ENCODE measurements at regions of chr15 and their contacts with region 1.

Region 1: DNA sequence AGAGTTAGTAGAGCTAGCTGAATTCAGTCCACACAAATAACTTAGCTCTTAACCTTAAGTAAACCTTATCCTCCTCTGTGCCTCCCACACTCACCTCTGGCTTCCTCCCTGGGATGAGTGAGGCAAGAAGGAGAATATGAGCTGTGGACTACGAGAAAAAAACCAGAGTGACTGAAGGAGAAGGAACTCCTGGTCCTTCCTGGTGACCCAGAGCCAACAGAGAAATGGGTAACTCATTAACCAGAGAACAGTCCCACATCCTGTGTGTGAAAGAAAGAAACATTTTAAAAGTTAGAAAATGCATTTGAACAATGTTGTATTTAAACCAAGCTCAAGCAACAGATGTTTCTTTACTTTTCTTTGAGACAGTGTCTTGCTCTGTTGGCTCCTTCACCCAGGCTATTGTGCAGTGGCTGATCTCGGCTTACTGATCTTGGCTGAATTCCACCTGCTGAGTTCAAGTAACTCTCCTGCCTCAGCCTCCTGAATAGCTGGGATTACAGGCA is 27.5 kb upstream of the FAM81A start:
- DNase-seq: peak; percentile 31
- ATAC-seq: peak; percentile 37
- H3K4me3 ChIP-seq: peak overlapping the region in 2 of 3 experiments; percentile 19 to 36; a peak in 1 of 6 replicates
- H3K27ac ChIP-seq: no peak overlapping the region
- H3K4me1 ChIP-seq: peaks cover 47% of the 10 kb centered on the region
- H3K27me3 ChIP-seq: no peaks in the 10 kb centered on the region
- CTCF ChIP-seq: no peak
- EP300 ChIP-seq: no peak
- POLR2A ChIP-seq: no peak
- RAD21 ChIP-seq: no peak

Region 2: DNA sequence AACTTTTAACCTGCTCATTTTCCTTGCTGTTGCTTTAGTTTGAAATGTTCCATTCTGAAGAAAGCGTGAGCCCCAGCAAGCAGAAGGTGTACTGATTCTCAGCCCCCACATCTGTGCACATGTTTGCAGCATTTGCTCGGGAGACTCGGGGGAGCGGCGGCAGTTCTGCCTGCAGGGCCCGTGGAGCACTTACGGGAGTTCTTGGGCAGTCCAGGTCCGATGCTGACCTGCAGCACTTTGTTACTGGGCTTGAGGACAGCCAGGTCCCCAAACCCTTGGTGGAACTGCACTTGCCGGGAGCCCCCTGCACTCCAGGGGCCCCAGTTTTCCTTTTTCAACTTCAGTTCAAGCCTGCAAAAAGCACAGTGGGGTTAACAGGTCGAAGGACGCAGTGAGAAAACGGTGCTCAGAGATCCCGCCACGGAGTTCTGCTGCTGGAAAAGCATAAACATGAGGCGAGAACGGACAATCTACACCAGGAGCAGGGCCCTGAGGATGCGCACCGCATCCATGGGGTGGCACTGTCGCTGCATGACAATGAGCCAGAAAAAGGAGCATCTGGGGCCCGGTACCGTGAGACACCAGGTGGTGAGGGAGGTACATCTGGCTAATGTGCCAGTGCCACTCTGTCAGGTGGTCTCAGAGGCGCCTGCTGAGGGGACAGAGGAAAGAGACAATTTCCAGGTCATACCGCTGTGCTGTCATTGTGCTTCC is 249.4 kb before region 1 on chr15:
- CTCF ChIA-PET with region 1: no interaction called
- POLR2A ChIA-PET with region 1: no interaction called
- in situ Hi-C with region 1: loop called (anchors 10 kb)
- intact Hi-C with region 1: no loop called
- DNase-seq: peak; percentile 25
- ATAC-seq: peak; percentile 87
- H3K4me3 ChIP-seq: no peak overlapping the region
- H3K27ac ChIP-seq: no peak overlapping the region
- H3K4me1 ChIP-seq: peaks cover 11% of the 10 kb centered on the region
- H3K27me3 ChIP-seq: no peaks in the 10 kb centered on the region
- CTCF ChIP-seq: peak; percentile 75
- EP300 ChIP-seq: no peak
- POLR2A ChIP-seq: no peak
- RAD21 ChIP-seq: peak; percentile 73

Region 3: DNA sequence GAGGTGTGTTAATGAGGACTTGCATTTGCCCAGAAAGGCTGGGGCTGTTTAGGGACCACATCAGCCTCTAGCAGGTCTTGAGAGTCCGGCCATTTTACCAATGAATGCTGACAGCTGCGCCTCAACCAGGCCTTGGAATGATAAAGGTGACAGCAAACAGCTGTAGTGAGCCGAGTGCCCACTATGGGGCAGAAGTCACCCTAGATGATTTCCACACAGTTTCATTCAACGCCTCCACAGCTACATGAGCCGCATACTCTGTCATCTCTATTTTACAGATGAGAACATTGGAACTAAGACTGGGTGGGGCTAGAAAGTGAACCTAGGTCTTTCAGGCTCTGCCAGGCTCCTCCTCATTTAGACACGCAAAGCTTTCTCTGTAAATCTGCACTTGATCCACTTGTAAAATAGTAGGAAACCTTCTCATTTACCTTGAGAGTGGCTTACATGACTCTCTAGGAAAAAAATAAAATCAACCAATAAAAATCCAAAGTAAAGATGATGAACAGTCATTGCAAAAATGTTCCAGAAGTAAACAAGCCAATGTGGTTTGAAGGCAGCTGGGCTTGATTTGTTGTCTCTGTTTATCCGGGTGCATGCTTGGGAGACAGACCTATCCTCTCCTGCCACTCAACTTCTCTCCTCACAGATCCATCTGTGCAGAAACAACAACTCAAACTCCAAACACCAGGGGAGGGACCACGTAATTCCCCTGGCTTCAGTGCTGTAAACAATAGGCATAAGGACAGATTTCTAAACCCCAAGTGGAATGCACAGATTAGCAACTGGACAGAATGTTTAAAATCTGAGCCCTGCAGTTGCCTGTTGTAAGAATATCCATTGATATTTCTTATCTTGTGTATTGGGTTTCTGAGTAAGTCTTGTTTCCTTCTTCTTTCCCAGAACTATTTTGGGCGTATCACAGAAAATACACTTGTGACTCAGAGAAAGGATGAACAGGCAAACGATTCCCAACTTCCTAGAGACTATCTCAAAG is 235.3 kb before region 1 on chr15:
- CTCF ChIA-PET with region 1: interaction called, 8 read pairs
- POLR2A ChIA-PET with region 1: no interaction called
- in situ Hi-C with region 1: no loop called
- intact Hi-C with region 1: loop called (anchors 2 kb)
- DNase-seq: peak; percentile 47
- ATAC-seq: peak; percentile 95
- H3K4me3 ChIP-seq: no peak overlapping the region
- H3K27ac ChIP-seq: no peak overlapping the region
- H3K4me1 ChIP-seq: peaks cover 6% of the 10 kb centered on the region
- H3K27me3 ChIP-seq: no peaks in the 10 kb centered on the region
- CTCF ChIP-seq: peak; percentile 70
- EP300 ChIP-seq: no peak
- POLR2A ChIP-seq: no peak
- RAD21 ChIP-seq: peak; percentile 64

Region 4: GRCh38 chr15:59199626-59200465 is 210.6 kb before region 1 on chr15:
- CTCF ChIA-PET with region 1: no interaction called
- POLR2A ChIA-PET with region 1: no interaction called
- in situ Hi-C with region 1: no loop called
- intact Hi-C with region 1: no loop called
- DNase-seq: no peak
- ATAC-seq: no peak
- H3K4me3 ChIP-seq: no peak overlapping the region
- H3K27ac ChIP-seq: no peak overlapping the region
- H3K4me1 ChIP-seq: no peaks in the 10 kb centered on the region
- H3K27me3 ChIP-seq: no peaks in the 10 kb centered on the region
- CTCF ChIP-seq: no peak
- EP300 ChIP-seq: no peak
- POLR2A ChIP-seq: no peak
- RAD21 ChIP-seq: no peak

Region 5: GRCh38 chr15:59247364-59247763 is 163.1 kb before region 1 on chr15:
- CTCF ChIA-PET with region 1: interaction called, 13 read pairs
- POLR2A ChIA-PET with region 1: no interaction called
- in situ Hi-C with region 1: no loop called
- intact Hi-C with region 1: loop called (anchors 1 kb)
- DNase-seq: peak; percentile 74
- ATAC-seq: peak; percentile 91
- H3K4me3 ChIP-seq: no peak overlapping the region
- H3K27ac ChIP-seq: no peak overlapping the region
- H3K4me1 ChIP-seq: peaks cover 6% of the 10 kb centered on the region
- H3K27me3 ChIP-seq: no peaks in the 10 kb centered on the region
- CTCF ChIP-seq: peak; percentile 74
- EP300 ChIP-seq: no peak
- POLR2A ChIP-seq: no peak
- RAD21 ChIP-seq: peak; percentile 59

Region 6: DNA sequence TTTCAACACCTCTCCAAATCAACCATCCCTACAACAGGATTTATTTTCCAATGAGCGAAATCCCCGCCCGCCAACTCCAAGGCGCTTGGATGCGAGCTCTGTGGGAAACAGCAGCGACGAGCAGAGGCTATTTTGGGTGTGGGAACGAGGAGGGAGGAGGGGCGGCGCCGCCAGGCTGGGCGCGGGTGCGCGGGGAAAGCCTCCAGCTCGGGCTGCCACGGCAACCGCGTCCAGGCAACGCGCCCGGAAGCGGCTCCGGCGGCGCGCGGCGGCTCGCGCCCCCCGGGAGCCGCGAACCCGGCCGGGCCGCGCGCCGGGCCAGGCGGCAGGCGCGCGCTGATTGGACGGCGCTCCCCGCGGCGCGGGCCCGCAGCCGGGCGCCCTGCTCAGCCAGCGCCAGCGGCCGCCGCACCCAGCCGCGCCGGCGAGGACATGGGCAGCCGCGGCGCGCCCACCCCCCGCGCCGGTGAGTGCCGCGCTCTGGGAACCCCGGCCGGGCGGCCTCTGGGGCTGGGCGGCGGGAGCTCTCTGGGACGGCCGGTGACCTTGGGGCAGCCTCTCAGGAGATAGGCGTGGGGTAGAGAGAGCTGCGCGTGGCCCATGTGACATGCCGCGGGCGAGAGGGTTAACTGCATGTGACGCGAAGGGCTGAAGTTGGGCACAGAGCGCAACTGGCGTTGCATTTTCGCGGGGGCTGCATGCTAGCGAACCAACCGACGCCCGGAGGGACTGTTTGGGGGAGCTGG is 27.5 kb after region 1 on chr15 and contains the start of gene FAM81A:
- CTCF ChIA-PET with region 1: no interaction called
- POLR2A ChIA-PET with region 1: no interaction called
- in situ Hi-C with region 1: no loop called
- intact Hi-C with region 1: no loop called
- DNase-seq: no peak
- ATAC-seq: peak; percentile 85
- H3K4me3 ChIP-seq: peak within 1 kb of the TSS; percentile 30 to 64 (median 48)
- H3K27ac ChIP-seq: no peak within 1 kb of the TSS
- H3K4me1 ChIP-seq: peaks cover 22% of the 10 kb centered on the region
- H3K27me3 ChIP-seq: peaks cover 0 to 55% of the 10 kb centered on the region in 2 experiments; a peak in 3 of 5 replicates
- CTCF ChIP-seq: no peak
- EP300 ChIP-seq: no peak
- POLR2A ChIP-seq: no peak
- RAD21 ChIP-seq: no peak
- total RNA-seq, gene FAM81A: 0.09 and 0.18 TPM in 2 replicates

Measured in HepG2 (cell line).